Activated CD4-positive, alpha-beta T cell treated with anti-CD3 and anti-CD28 coated beads for 36 hours (primary cell): ENCODE measurements at regions of chr2 and their contacts with region 1.

Region 1: GRCh38 chr2:136327162-136327852 is 209.4 kb upstream of the CXCR4 start:
- DNase-seq: peak; percentile 88
- ATAC-seq: peak; percentile 95
- H3K4me3 Mint-ChIP-seq: peak overlapping the region; percentile 56
- H3K27ac Mint-ChIP-seq: peak overlapping the region; percentile 92
- H3K4me1 Mint-ChIP-seq: peaks cover 69% of the 10 kb centered on the region
- H3K27me3 Mint-ChIP-seq: no peaks in the 10 kb centered on the region

Region 2: GRCh38 chr2:135948642-135949355 is 378.5 kb before region 1 on chr2:
- CTCF ChIA-PET with region 1: no interaction called
- POLR2A ChIA-PET with region 1: no interaction called
- intact Hi-C with region 1: loop called in 1 of 2 experiments (anchors 2 kb)
- DNase-seq: no peak
- ATAC-seq: peak; percentile 81
- H3K4me3 Mint-ChIP-seq: peak overlapping the region; percentile 39
- H3K27ac Mint-ChIP-seq: peak overlapping the region; percentile 84
- H3K4me1 Mint-ChIP-seq: peaks cover 55% of the 10 kb centered on the region
- H3K27me3 Mint-ChIP-seq: no peaks in the 10 kb centered on the region

Region 3: GRCh38 chr2:136052369-136053362 is 274.6 kb before region 1 on chr2:
- CTCF ChIA-PET with region 1: no interaction called
- POLR2A ChIA-PET with region 1: no interaction called
- intact Hi-C with region 1: loop called (anchors 2 to 5 kb)
- DNase-seq: peak; percentile 20
- ATAC-seq: peak; percentile 21
- H3K4me3 Mint-ChIP-seq: no peak overlapping the region
- H3K27ac Mint-ChIP-seq: peak overlapping the region; percentile 91
- H3K4me1 Mint-ChIP-seq: peaks cover 79% of the 10 kb centered on the region
- H3K27me3 Mint-ChIP-seq: no peaks in the 10 kb centered on the region

Region 4: GRCh38 chr2:136238286-136239078 is 88.8 kb before region 1 on chr2:
- CTCF ChIA-PET with region 1: interaction called, 4 read pairs
- POLR2A ChIA-PET with region 1: no interaction called
- intact Hi-C with region 1: loop called in 1 of 2 experiments (anchors 2 kb)
- DNase-seq: peak; percentile 44
- ATAC-seq: peak; percentile 82
- H3K4me3 Mint-ChIP-seq: peak overlapping the region; percentile 15
- H3K27ac Mint-ChIP-seq: peak overlapping the region; percentile 93
- H3K4me1 Mint-ChIP-seq: peaks cover 43% of the 10 kb centered on the region
- H3K27me3 Mint-ChIP-seq: no peaks in the 10 kb centered on the region

Region 5: GRCh38 chr2:136310797-136311603 is 16.3 kb before region 1 on chr2:
- CTCF ChIA-PET with region 1: interaction called, 10 read pairs
- POLR2A ChIA-PET with region 1: interaction called, 8 read pairs
- intact Hi-C with region 1: loop called (anchors 1 kb)
- DNase-seq: peak; percentile 50
- ATAC-seq: peak; percentile 78
- H3K4me3 Mint-ChIP-seq: no peak overlapping the region
- H3K27ac Mint-ChIP-seq: peak overlapping the region; percentile 86
- H3K4me1 Mint-ChIP-seq: peaks cover 36% of the 10 kb centered on the region
- H3K27me3 Mint-ChIP-seq: peaks cover 4% of the 10 kb centered on the region

Region 6: GRCh38 chr2:136344339-136344738 is 17.0 kb after region 1 on chr2:
- CTCF ChIA-PET with region 1: no interaction called
- POLR2A ChIA-PET with region 1: no interaction called
- intact Hi-C with region 1: no loop called
- DNase-seq: no peak
- ATAC-seq: no peak
- H3K4me3 Mint-ChIP-seq: no peak overlapping the region
- H3K27ac Mint-ChIP-seq: no peak overlapping the region
- H3K4me1 Mint-ChIP-seq: no peaks in the 10 kb centered on the region
- H3K27me3 Mint-ChIP-seq: no peaks in the 10 kb centered on the region

Region 7: GRCh38 chr2:136378712-136379595 is 51.6 kb after region 1 on chr2:
- CTCF ChIA-PET with region 1: interaction called, 11 read pairs
- POLR2A ChIA-PET with region 1: interaction called, 21 read pairs
- intact Hi-C with region 1: loop called (anchors 1 kb)
- DNase-seq: peak; percentile 87
- ATAC-seq: peak; percentile 11
- H3K4me3 Mint-ChIP-seq: no peak overlapping the region
- H3K27ac Mint-ChIP-seq: no peak overlapping the region
- H3K4me1 Mint-ChIP-seq: peaks cover 82% of the 10 kb centered on the region
- H3K27me3 Mint-ChIP-seq: no peaks in the 10 kb centered on the region